Psoas muscle (tissue), 8 donors: ENCODE measurements at regions of chr18 and their contacts with region 1.

Region 1: DNA sequence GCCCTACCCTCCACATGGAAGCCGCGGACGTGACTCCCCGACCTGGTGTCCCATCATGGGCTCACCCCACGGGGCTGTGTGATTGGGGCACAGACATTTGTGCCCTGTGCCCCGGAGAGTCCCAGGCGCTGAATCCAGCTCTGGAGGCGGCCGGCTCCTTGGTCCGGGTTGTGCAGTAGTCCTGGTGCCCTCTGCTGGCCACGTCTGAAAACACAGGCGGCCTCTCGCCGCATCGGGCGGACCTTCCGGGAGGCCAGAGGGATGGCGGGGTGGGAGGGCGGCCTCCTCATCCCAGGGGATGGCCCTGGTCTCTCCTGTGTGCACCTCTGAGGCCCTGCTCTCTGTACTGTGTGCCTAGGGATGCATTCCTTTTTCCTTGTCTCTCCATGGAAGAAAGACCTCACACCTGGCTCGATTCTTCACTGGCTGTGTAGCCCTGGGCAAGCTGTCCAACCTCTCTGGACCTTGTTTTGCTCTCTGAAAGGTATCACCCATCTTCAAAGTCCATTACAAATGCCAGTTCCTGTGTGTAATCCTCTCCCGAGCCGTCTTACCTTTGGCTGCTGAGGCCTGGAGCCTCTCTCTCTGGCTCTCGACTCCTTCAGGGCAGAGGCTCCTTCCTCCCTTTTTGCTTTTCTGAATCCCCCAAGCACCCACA is 27.6 kb downstream of the CELF4 start:
- DNase-seq: peak; percentile 72 to 83
- ATAC-seq: peak; percentile 71 to 87 (median 79)
- H3K4me3 ChIP-seq: no peak overlapping the region
- H3K27ac ChIP-seq: no peak overlapping the region
- H3K4me1 ChIP-seq: no peaks in the 10 kb centered on the region
- H3K27me3 ChIP-seq: peaks cover 0 to 75% (median 5%) of the 10 kb centered on the region in 3 donors
- CTCF ChIP-seq: peak; percentile 80

Region 2: DNA sequence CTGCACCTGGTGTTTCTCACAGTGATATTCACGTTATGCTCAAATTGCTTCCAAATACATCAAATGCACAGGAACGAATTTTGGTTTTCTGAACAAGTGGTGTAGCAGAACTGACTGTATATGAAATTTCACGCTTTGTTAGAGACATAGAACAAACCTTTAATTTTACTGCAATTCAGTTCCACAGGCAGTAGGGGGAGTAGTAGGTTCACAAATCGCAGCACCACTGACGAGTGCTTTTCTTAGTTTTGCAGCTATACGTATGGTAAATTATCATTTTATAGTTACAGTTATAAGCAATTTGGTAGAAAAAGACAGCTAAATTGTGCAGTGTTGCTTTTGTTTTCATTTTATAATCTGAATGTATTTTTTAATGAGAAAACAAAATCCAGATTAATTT is 595.7 kb before region 1 on chr18:
- intact Hi-C with region 1: loop called in 1 of 2 experiments (anchors 5 kb)
- DNase-seq: no peak
- ATAC-seq: no peak
- H3K4me3 ChIP-seq: no peak overlapping the region
- H3K27ac ChIP-seq: no peak overlapping the region
- H3K4me1 ChIP-seq: no peaks in the 10 kb centered on the region
- H3K27me3 ChIP-seq: no peaks in the 10 kb centered on the region
- CTCF ChIP-seq: no peak

Region 3: GRCh38 chr18:37341016-37341415 is 197.0 kb before region 1 on chr18:
- intact Hi-C with region 1: loop called (anchors 2 to 5 kb)
- DNase-seq: no peak
- ATAC-seq: no peak
- H3K4me3 ChIP-seq: no peak overlapping the region
- H3K27ac ChIP-seq: no peak overlapping the region
- H3K4me1 ChIP-seq: no peaks in the 10 kb centered on the region
- H3K27me3 ChIP-seq: peaks cover 0 to 11% (median 3%) of the 10 kb centered on the region in 3 donors
- CTCF ChIP-seq: no peak

Region 4: DNA sequence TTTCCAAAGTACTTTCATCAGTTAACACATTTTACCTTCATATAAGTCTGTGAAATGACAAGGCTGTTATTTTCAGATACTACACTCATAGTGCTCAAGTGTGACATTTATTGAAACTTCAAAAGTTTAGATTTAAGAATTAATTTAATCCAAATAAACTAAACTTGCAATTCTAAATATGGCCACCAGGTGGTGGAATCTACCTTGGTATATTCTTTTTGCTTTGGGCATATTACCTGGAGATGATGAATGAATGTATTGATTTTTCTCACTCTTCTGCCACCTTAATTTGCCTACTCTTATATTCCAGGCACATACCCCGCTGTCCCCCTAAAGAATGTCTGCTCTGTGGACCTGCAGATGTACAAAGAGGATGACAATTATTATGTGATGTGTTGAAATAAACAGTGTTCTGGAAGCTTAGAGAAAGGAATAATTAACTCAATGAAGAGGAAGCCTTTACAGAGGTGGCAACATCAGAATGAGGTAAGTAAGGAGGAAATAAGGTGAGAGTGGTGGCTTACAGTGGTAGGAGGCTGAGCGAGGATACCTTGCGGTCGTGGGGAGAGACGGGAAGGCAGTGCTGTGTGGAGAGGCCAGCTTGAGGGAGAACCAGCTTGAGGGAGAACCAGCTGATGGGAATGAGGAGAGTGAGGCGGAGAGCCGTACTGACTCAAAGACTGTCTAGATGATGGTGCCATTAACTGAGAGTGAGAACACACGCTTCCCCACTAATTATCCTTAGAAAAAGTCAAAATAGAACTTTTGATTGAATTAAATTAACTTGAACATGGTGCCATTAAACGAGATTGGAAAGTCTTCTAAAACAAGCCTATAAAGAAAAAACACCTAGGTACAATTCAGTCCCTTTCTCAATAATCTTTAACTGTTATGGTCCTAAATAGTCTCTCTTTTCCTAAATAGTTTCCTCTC is 151.9 kb before region 1 on chr18:
- intact Hi-C with region 1: loop called (anchors 1 to 5 kb)
- DNase-seq: no peak
- ATAC-seq: no peak
- H3K4me3 ChIP-seq: no peak overlapping the region
- H3K27ac ChIP-seq: no peak overlapping the region
- H3K4me1 ChIP-seq: no peaks in the 10 kb centered on the region
- H3K27me3 ChIP-seq: peaks cover 0 to 7% (median 3%) of the 10 kb centered on the region in 3 donors
- CTCF ChIP-seq: peak; percentile 74

Region 5: GRCh38 chr18:37445368-37445767 is 92.6 kb before region 1 on chr18:
- intact Hi-C with region 1: loop called in 1 of 2 experiments (anchors 5 kb)
- DNase-seq: no peak
- ATAC-seq: no peak
- H3K4me3 ChIP-seq: no peak overlapping the region
- H3K27ac ChIP-seq: no peak overlapping the region
- H3K4me1 ChIP-seq: no peaks in the 10 kb centered on the region
- H3K27me3 ChIP-seq: peaks cover 0 to 25% (median 10%) of the 10 kb centered on the region in 3 donors
- CTCF ChIP-seq: no peak

Region 6: GRCh38 chr18:37484983-37485834 is 52.8 kb before region 1 on chr18:
- intact Hi-C with region 1: loop called in 1 of 2 experiments (anchors 5 kb)
- DNase-seq: peak in 1 of 2 donors; percentile 19
- ATAC-seq: peak; percentile 73 to 80 (median 78)
- H3K4me3 ChIP-seq: peak overlapping the region; percentile 55
- H3K27ac ChIP-seq: no peak overlapping the region
- H3K4me1 ChIP-seq: no peaks in the 10 kb centered on the region
- H3K27me3 ChIP-seq: peaks cover 0 to 80% (median 30%) of the 10 kb centered on the region in 3 donors
- CTCF ChIP-seq: peak; percentile 45

Region 7: GRCh38 chr18:37612524-37613252 is 74.7 kb after region 1 on chr18:
- intact Hi-C with region 1: no loop called
- DNase-seq: no peak
- ATAC-seq: no peak
- H3K4me3 ChIP-seq: no peak overlapping the region
- H3K27ac ChIP-seq: no peak overlapping the region
- H3K4me1 ChIP-seq: no peaks in the 10 kb centered on the region
- H3K27me3 ChIP-seq: peaks cover 0 to 4% (median 0%) of the 10 kb centered on the region in 3 donors
- CTCF ChIP-seq: no peak

Region 8: GRCh38 chr18:37649930-37650329 is 111.9 kb after region 1 on chr18:
- intact Hi-C with region 1: no loop called
- DNase-seq: no peak
- ATAC-seq: no peak
- H3K4me3 ChIP-seq: no peak overlapping the region
- H3K27ac ChIP-seq: no peak overlapping the region
- H3K4me1 ChIP-seq: no peaks in the 10 kb centered on the region
- H3K27me3 ChIP-seq: no peaks in the 10 kb centered on the region
- CTCF ChIP-seq: no peak